Activated CD4-positive, alpha-beta T cell treated with anti-CD3 and anti-CD28 coated beads, Interleukin-2, amount 10 ng/mL, durations not matched to agents 7 days and 5 days (primary cell): ENCODE measurements at regions of chr6 and their contacts with region 1.

Region 1: DNA sequence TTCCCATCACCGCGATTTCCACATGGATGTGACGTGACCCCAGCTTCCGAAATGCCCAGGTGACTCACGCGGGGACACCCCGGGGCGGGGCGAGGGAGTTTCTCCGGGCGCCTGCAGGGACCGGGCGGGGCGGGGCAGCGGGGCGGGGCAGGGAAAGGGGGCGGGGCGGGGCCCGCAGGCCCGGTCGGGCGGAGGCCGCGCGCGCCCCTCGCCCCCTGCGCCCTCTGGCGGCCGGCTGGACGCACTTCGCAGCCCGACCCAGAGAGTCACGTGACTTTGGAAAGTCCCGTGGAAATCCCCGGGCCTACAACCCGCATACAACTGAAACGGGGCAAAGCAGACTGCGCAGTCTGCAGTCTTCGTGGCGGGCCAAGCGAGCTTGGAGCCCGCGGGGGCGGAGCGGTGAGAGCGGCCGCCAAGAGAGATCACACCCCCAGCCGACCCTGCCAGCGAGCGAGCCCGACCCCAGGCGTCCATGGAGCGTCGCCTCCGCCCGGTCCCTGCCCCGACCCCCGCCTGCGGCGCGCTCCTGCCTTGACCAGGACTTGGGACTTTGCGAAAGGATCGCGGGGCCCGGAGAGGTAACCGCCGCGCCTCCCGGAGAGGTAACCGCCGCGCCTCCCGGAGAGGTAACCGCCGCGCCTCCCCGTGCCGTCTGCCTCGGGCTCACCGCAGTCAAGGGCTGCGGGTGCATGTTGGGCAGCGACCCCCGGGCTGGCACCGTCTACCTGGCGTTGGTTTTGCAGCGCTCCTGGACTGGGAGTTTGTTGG is at the start of gene TNFAIP3:
- DNase-seq: peak; percentile 95
- H3K4me3 Mint-ChIP-seq: peak within 1 kb of the TSS; percentile 91
- H3K27ac Mint-ChIP-seq: peak within 1 kb of the TSS; percentile 98
- H3K4me1 Mint-ChIP-seq: peaks cover 57% of the 10 kb centered on the region
- H3K27me3 Mint-ChIP-seq: no peaks in the 10 kb centered on the region
- total RNA-seq, gene TNFAIP3: 41.8 to 43.9 TPM

Region 2: GRCh38 chr6:136927292-136927691 is 939.8 kb before region 1 on chr6:
- CTCF ChIA-PET with region 1: no interaction called
- POLR2A ChIA-PET with region 1: no interaction called
- DNase-seq: peak; percentile 29
- H3K4me3 Mint-ChIP-seq: no peak overlapping the region
- H3K27ac Mint-ChIP-seq: no peak overlapping the region
- H3K4me1 Mint-ChIP-seq: peaks cover 10% of the 10 kb centered on the region
- H3K27me3 Mint-ChIP-seq: peaks cover 41% of the 10 kb centered on the region

Region 3: GRCh38 chr6:137697267-137697938 is 169.7 kb before region 1 on chr6:
- CTCF ChIA-PET with region 1: interaction called, 27 read pairs
- POLR2A ChIA-PET with region 1: no interaction called
- DNase-seq: no peak
- H3K4me3 Mint-ChIP-seq: no peak overlapping the region
- H3K27ac Mint-ChIP-seq: no peak overlapping the region
- H3K4me1 Mint-ChIP-seq: peaks cover 27% of the 10 kb centered on the region
- H3K27me3 Mint-ChIP-seq: no peaks in the 10 kb centered on the region

Region 4: GRCh38 chr6:137791281-137792159 is 75.6 kb before region 1 on chr6:
- CTCF ChIA-PET with region 1: interaction called, 17 read pairs
- POLR2A ChIA-PET with region 1: no interaction called
- DNase-seq: no peak
- H3K4me3 Mint-ChIP-seq: peak overlapping the region; percentile 53
- H3K27ac Mint-ChIP-seq: peak overlapping the region; percentile 5
- H3K4me1 Mint-ChIP-seq: peaks cover 61% of the 10 kb centered on the region
- H3K27me3 Mint-ChIP-seq: no peaks in the 10 kb centered on the region

Region 5: GRCh38 chr6:137823826-137824555 is 43.1 kb before region 1 on chr6:
- CTCF ChIA-PET with region 1: interaction called, 16 read pairs
- POLR2A ChIA-PET with region 1: no interaction called
- DNase-seq: peak; percentile 80
- H3K4me3 Mint-ChIP-seq: peak overlapping the region; percentile 70
- H3K27ac Mint-ChIP-seq: peak overlapping the region; percentile 99
- H3K4me1 Mint-ChIP-seq: peaks cover 79% of the 10 kb centered on the region
- H3K27me3 Mint-ChIP-seq: no peaks in the 10 kb centered on the region

Region 6: GRCh38 chr6:137938770-137939379 is 71.8 kb after region 1 on chr6:
- CTCF ChIA-PET with region 1: interaction called, 30 read pairs
- POLR2A ChIA-PET with region 1: no interaction called
- DNase-seq: no peak
- H3K4me3 Mint-ChIP-seq: no peak overlapping the region
- H3K27ac Mint-ChIP-seq: no peak overlapping the region
- H3K4me1 Mint-ChIP-seq: peaks cover 20% of the 10 kb centered on the region
- H3K27me3 Mint-ChIP-seq: no peaks in the 10 kb centered on the region

Region 7: DNA sequence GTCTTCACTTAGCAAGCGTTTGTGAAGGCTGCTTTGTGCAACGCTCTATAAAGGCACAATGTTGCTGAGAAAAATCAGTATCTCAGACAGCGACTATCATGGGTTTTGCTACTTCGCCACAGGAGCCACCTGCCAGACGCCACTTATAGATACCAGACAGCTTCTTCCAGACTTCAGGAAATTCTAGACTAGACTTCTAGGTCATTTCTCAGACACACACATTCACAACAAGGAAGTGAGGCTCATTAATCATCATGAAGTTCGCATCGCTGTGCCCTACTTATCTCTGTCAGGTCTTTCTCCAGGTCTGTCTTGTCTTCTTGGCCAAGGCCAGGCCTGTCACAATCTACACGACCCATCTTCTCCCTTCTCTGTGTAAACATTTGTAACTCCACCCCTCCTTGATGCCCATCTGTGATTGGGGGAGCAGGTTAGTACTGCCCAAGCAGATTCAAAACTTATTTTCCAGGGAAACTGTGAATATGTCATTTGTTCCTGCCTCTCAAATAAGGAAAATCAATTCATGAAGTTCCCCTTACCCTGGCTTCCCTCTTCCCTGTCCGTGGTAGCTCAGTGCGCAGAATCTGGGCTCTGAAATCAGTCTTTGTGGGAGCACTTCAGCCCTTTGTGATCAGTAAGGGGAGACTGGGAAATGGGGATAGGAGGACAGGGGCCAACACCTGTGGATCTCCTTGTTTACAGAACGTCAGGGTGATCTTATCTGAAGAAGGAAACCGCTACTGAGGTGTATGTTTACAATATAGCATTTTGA is 115.5 kb after region 1 on chr6:
- CTCF ChIA-PET with region 1: interaction called, 10 read pairs
- POLR2A ChIA-PET with region 1: no interaction called
- DNase-seq: no peak
- H3K4me3 Mint-ChIP-seq: no peak overlapping the region
- H3K27ac Mint-ChIP-seq: peak overlapping the region; percentile 3
- H3K4me1 Mint-ChIP-seq: peaks cover 13% of the 10 kb centered on the region
- H3K27me3 Mint-ChIP-seq: peaks cover 10% of the 10 kb centered on the region

Region 8: GRCh38 chr6:138044458-138044857 is 177.4 kb after region 1 on chr6:
- CTCF ChIA-PET with region 1: no interaction called
- POLR2A ChIA-PET with region 1: no interaction called
- DNase-seq: no peak
- H3K4me3 Mint-ChIP-seq: no peak overlapping the region
- H3K27ac Mint-ChIP-seq: no peak overlapping the region
- H3K4me1 Mint-ChIP-seq: no peaks in the 10 kb centered on the region
- H3K27me3 Mint-ChIP-seq: peaks cover 20% of the 10 kb centered on the region